ENCODE measurements at regions of chr5 and their contacts with region 1.

Region 1: GRCh38 chr5:150778517-150779396 is at the start of gene SMIM3:
- DNase-seq: no peak
- H3K4me3 ChIP-seq: peak within 1 kb of the TSS; percentile 92
- H3K27ac ChIP-seq: peak within 1 kb of the TSS; percentile 78
- H3K27me3 ChIP-seq: no peaks in the 10 kb centered on the region
- CTCF ChIP-seq: peak; percentile 50
- polyA plus RNA-seq, gene SMIM3: 34.3 and 36.3 TPM in 2 replicates

Region 2: GRCh38 chr5:150758531-150759333 is 20.0 kb before region 1 on chr5 and contains the start of gene DCTN4:
- CTCF ChIA-PET with region 1: interaction called, 11 read pairs
- POLR2A ChIA-PET with region 1: interaction called, 26 read pairs
- DNase-seq: peak; percentile 98
- H3K4me3 ChIP-seq: peak within 1 kb of the TSS; percentile 88
- H3K27ac ChIP-seq: peak within 1 kb of the TSS; percentile 97
- H3K27me3 ChIP-seq: no peaks in the 10 kb centered on the region
- CTCF ChIP-seq: no peak
- polyA plus RNA-seq, gene DCTN4: 54.6 and 61.1 TPM in 2 replicates

Region 3: GRCh38 chr5:150801117-150801927 is 22.6 kb after region 1 on chr5:
- CTCF ChIA-PET with region 1: interaction called, 33 read pairs
- POLR2A ChIA-PET with region 1: interaction called, 3 read pairs
- DNase-seq: no peak
- H3K4me3 ChIP-seq: peak overlapping the region; percentile 40
- H3K27ac ChIP-seq: no peak overlapping the region
- H3K27me3 ChIP-seq: no peaks in the 10 kb centered on the region
- CTCF ChIP-seq: peak; percentile 64

Measured in AG04450 (cell line).